CD4-positive, alpha-beta memory T cell (primary cell): ENCODE measurements at regions of chr1 and their contacts with region 1.

Region 1: GRCh38 chr1:6245086-6245868 is 1.3 kb downstream of the HES3 start:
- DNase-seq: peak; percentile 67 to 78 (median 75)
- H3K4me3 ChIP-seq: no peak overlapping the region
- H3K4me3 Mint-ChIP-seq: no peak overlapping the region
- H3K27ac ChIP-seq: no peak overlapping the region
- H3K27ac Mint-ChIP-seq: peak overlapping the region in 1 of 7 donors; percentile 44
- H3K4me1 ChIP-seq: peaks cover 23% of the 10 kb centered on the region
- H3K4me1 Mint-ChIP-seq: peaks cover 8 to 29% (median 13%) of the 10 kb centered on the region in 4 donors
- H3K27me3 ChIP-seq: peaks cover 43% of the 10 kb centered on the region
- H3K27me3 Mint-ChIP-seq: peaks cover 30 to 42% of the 10 kb centered on the region in 2 donors

Region 2: GRCh38 chr1:6026095-6026809 is 219.0 kb before region 1 on chr1:
- CTCF ChIA-PET with region 1: no interaction called
- POLR2A ChIA-PET with region 1: no interaction called
- intact Hi-C with region 1: loop called (anchors 10 kb)
- DNase-seq: peak; percentile 89 to 96 (median 90)
- H3K4me3 ChIP-seq: peak overlapping the region; percentile 54 to 89
- H3K4me3 Mint-ChIP-seq: peak overlapping the region; percentile 88 to 99 (median 92)
- H3K27ac ChIP-seq: peak overlapping the region; percentile 89
- H3K27ac Mint-ChIP-seq: peak overlapping the region; percentile 96 to 99 (median 98)
- H3K4me1 ChIP-seq: peaks cover 53% of the 10 kb centered on the region
- H3K4me1 Mint-ChIP-seq: peaks cover 43 to 74% (median 56%) of the 10 kb centered on the region in 4 donors
- H3K27me3 ChIP-seq: no peaks in the 10 kb centered on the region
- H3K27me3 Mint-ChIP-seq: no peaks in the 10 kb centered on the region

Region 3: GRCh38 chr1:6141592-6141991 is 103.7 kb before region 1 on chr1:
- CTCF ChIA-PET with region 1: no interaction called
- POLR2A ChIA-PET with region 1: no interaction called
- intact Hi-C with region 1: no loop called
- DNase-seq: no peak
- H3K4me3 ChIP-seq: no peak overlapping the region
- H3K4me3 Mint-ChIP-seq: no peak overlapping the region
- H3K27ac ChIP-seq: no peak overlapping the region
- H3K27ac Mint-ChIP-seq: no peak overlapping the region
- H3K4me1 ChIP-seq: no peaks in the 10 kb centered on the region
- H3K4me1 Mint-ChIP-seq: no peaks in the 10 kb centered on the region
- H3K27me3 ChIP-seq: no peaks in the 10 kb centered on the region
- H3K27me3 Mint-ChIP-seq: peaks cover 0 to 2% of the 10 kb centered on the region in 2 donors

Region 4: DNA sequence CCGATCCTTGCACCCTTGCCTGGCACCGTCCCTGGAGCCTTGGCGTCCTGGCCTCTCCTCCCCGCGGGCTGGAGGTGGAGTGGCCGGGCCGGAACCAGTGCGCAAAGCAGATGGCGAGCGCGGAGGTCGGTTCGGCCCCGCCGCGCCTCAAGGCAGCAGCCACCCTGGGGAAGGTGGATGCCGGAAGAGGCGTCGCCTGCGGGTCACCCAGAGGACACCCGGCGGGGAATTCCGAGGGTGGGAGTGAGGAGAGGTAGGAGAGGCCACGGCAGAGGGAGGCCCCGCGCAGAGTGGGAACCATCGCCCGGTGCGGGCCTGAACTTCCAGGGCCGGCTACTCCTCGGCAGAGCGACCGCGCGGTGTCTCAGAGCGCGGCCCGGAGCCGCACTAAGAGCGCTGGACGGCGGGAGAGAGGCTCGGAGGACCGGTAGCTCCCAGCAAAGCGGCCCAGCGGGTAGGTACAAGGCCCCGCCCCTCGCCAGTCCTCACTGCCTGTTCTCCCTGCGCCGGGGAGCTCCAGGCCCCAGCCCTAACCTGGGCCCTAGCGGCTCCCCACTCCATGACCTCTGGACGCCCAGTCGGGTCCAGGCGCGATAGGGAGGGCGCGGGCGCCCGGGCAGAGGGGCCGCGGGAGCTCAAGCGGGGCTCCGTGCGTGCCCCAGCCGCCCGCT is 39.3 kb before region 1 on chr1 and contains the start of gene RNF207:
- CTCF ChIA-PET with region 1: interaction called, 4 read pairs
- POLR2A ChIA-PET with region 1: interaction called, 3 read pairs
- intact Hi-C with region 1: loop called (anchors 5 kb)
- DNase-seq: peak; percentile 50 to 78 (median 58)
- H3K4me3 ChIP-seq: peak within 1 kb of the TSS; percentile 67 to 73
- H3K4me3 Mint-ChIP-seq: peak within 1 kb of the TSS; percentile 73 to 85 (median 79)
- H3K27ac ChIP-seq: peak within 1 kb of the TSS; percentile 38
- H3K27ac Mint-ChIP-seq: peak within 1 kb of the TSS in 4 of 7 donors; percentile 16 to 35 (median 30)
- H3K4me1 ChIP-seq: peaks cover 25% of the 10 kb centered on the region
- H3K4me1 Mint-ChIP-seq: peaks cover 3 to 31% (median 11%) of the 10 kb centered on the region in 4 donors
- H3K27me3 ChIP-seq: no peaks in the 10 kb centered on the region
- H3K27me3 Mint-ChIP-seq: peaks cover 0 to 3% of the 10 kb centered on the region in 2 donors
- total RNA-seq, gene RNF207: 8.7 to 9.4 TPM

Region 5: DNA sequence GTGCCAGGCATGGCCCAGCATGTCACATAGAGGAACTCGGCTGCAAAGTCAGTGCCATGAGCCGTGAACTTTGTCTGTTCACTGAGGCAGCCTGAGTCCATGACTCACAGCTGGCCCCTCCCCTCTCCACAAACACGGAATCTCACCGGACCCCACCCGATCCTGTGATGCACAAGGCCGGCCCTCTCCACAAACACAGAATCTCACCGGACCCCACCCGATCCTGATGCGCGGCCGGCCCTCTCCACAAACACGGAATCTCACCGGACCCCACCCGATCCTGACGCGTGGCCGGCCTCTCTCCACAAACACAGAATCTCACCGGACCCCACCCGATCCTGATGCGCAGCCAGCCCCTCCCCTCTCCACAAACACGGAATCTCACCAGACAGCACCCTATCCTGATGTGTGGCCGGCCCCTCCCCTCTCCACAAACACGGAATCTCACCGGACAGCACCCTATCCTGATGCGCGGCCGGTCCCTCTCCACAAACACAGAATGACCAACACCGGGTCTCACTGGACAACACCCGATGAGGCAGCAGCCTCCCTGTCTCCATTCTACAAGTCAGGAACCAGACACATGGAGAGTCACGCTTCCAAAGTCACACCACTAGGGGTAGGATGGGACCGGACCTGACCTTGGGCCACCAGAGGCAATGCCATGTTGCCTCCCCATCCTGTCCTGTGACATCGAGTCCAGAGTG is 55.2 kb after region 1 on chr1:
- CTCF ChIA-PET with region 1: no interaction called
- POLR2A ChIA-PET with region 1: no interaction called
- intact Hi-C with region 1: no loop called
- DNase-seq: no peak
- H3K4me3 ChIP-seq: no peak overlapping the region
- H3K4me3 Mint-ChIP-seq: no peak overlapping the region
- H3K27ac ChIP-seq: no peak overlapping the region
- H3K27ac Mint-ChIP-seq: no peak overlapping the region
- H3K4me1 ChIP-seq: no peaks in the 10 kb centered on the region
- H3K4me1 Mint-ChIP-seq: no peaks in the 10 kb centered on the region
- H3K27me3 ChIP-seq: no peaks in the 10 kb centered on the region
- H3K27me3 Mint-ChIP-seq: no peaks in the 10 kb centered on the region

Region 6: DNA sequence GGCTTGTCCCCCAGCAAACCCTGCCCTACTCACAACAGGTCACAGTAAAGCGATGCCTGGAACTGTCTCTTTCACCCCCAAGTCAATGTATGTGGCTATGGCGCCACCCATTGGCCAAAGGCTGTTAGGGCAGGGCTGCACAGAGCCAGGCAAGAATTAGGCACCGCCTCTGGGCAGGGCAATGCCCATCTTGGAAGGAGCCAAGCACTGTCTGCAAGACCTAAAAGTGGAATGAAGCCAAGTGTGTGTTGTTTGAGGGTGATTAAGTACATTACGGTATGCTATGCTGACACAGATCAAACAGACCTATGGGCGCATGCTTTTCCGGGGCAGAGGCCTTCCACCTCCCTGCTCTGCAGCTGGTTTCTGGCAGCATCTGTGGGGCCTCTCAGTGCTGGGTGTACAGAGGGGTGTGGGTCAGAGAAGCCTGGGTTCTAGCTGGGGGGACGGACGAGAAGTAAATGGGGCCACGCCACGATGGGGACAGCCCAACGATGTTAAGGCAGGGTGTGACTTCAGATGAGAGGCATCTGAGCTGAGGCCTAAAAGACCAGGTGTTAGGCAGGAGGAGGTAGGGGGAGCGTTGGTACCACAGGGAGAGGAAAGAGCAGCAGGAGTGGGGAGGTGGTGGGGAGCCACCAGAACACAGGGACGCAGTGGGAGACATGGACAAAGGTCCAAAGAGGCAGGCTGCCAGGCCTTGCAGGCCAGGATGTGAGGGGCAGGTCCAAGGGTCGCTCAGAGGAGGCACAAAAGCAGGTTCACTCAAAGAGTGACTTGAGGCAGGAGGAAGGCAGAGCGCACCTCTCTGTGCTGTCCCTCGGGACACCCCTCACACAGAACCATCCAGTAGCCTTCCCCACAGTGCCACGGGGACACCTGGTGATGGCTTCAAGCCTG is 98.5 kb after region 1 on chr1:
- CTCF ChIA-PET with region 1: interaction called, 26 read pairs
- POLR2A ChIA-PET with region 1: interaction called, 3 read pairs
- intact Hi-C with region 1: loop called (anchors 1 kb)
- DNase-seq: peak; percentile 50 to 56 (median 51)
- H3K4me3 ChIP-seq: no peak overlapping the region
- H3K4me3 Mint-ChIP-seq: peak overlapping the region in 1 of 8 donors; percentile 37
- H3K27ac ChIP-seq: no peak overlapping the region
- H3K27ac Mint-ChIP-seq: peak overlapping the region in 2 of 7 donors; percentile 29 to 84
- H3K4me1 ChIP-seq: peaks cover 13% of the 10 kb centered on the region
- H3K4me1 Mint-ChIP-seq: peaks cover 8 to 20% (median 11%) of the 10 kb centered on the region in 4 donors
- H3K27me3 ChIP-seq: no peaks in the 10 kb centered on the region
- H3K27me3 Mint-ChIP-seq: no peaks in the 10 kb centered on the region

Region 7: DNA sequence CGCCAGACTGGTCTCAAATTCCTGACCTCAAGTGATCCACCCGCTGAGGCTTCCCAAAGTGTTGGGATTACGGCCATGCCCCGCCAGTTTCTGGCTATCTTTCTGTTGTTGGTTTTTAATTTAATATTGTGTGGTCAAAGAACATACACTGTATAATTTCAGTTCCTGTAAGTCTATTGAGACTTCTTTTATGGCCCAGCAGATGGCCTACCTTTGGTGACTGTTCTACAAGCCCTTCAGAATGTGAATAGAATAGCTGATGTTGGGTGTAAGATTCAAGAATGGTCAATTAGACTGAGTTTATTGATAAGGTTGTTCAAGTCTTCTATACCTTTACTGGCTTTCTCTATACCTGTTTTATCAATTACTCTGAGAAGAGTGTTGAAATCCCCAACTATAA is 163.8 kb after region 1 on chr1:
- CTCF ChIA-PET with region 1: interaction called, 66 read pairs
- POLR2A ChIA-PET with region 1: interaction called, 7 read pairs
- intact Hi-C with region 1: loop called (anchors 1 kb)
- DNase-seq: no peak
- H3K4me3 ChIP-seq: no peak overlapping the region
- H3K4me3 Mint-ChIP-seq: no peak overlapping the region
- H3K27ac ChIP-seq: no peak overlapping the region
- H3K27ac Mint-ChIP-seq: no peak overlapping the region
- H3K4me1 ChIP-seq: no peaks in the 10 kb centered on the region
- H3K4me1 Mint-ChIP-seq: peaks cover 0 to 4% (median 1%) of the 10 kb centered on the region in 4 donors
- H3K27me3 ChIP-seq: no peaks in the 10 kb centered on the region
- H3K27me3 Mint-ChIP-seq: peaks cover 5 to 15% of the 10 kb centered on the region in 2 donors

Region 8: DNA sequence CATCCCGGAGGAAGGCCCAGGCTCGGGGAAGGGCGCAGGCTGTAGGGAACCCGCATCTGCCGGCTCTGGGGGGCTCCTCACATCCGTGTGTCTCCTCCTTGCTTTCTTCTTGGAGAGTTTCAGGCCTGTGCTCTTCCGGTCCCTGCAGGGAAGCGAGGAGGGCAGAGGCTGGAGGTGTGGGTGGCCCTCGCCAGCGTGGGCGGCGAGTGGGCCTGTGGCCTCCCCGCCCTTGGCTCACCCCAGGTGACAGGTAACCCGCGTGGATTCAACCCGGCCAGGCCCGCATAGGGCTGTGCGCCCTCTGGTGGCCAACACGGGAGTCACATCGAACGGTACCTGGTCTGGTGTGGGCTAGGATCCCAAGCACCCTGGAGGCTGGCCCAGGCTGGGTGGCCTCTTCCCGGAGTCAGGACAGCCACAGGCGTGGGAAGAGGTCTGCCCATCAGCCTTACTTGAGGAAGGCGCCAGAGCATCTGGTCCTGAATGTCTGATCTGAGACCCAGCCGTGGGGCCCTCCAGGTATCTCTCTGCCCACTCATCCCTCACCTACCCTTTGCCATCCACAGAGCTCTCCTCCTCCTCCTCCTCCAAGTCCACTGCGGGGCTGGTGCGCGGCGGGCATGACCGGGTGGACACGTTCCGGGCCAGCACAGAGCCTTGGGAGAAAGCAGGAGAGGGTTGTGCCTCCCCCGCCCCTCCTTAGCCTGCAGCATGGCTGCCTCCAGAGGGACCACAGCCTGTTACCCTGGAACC is 230.3 kb after region 1 on chr1:
- CTCF ChIA-PET with region 1: interaction called, 3 read pairs
- POLR2A ChIA-PET with region 1: no interaction called
- intact Hi-C with region 1: loop called (anchors 1 kb)
- DNase-seq: peak; percentile 76 to 84 (median 79)
- H3K4me3 ChIP-seq: no peak overlapping the region
- H3K4me3 Mint-ChIP-seq: peak overlapping the region in 2 of 8 donors; percentile 35 to 49
- H3K27ac ChIP-seq: no peak overlapping the region
- H3K27ac Mint-ChIP-seq: peak overlapping the region in 2 of 7 donors; percentile 18 to 27
- H3K4me1 ChIP-seq: peaks cover 5% of the 10 kb centered on the region
- H3K4me1 Mint-ChIP-seq: peaks cover 2 to 8% (median 5%) of the 10 kb centered on the region in 4 donors
- H3K27me3 ChIP-seq: no peaks in the 10 kb centered on the region
- H3K27me3 Mint-ChIP-seq: no peaks in the 10 kb centered on the region